HepG2 (cell line): ENCODE measurements at regions of chr6 and their contacts with region 1.

Region 1: DNA sequence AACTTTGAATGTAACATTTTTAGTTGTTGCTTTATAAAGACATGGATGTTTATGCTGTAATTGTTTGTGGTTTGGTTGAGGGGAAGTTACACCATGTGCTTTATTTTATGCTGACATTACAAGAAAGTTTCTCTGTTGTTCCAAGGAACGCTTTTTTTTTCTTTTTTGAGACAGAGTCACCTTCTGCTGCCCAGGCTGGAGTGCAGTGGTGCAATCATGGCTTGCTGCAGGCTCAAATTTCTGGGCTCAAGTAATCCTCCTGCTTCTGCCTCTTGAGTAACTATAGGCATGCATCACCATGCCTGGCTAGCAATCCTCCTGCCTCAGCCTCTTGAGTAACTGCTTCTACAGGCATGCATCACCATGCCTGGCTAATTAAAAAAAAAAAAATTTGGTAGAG is 21.0 kb upstream of the IFNGR1 start:
- DNase-seq: peak; percentile 35
- ATAC-seq: no peak
- H3K4me3 ChIP-seq: no peak overlapping the region
- H3K27ac ChIP-seq: no peak overlapping the region
- H3K4me1 ChIP-seq: peaks cover 57% of the 10 kb centered on the region
- H3K27me3 ChIP-seq: no peaks in the 10 kb centered on the region
- CTCF ChIP-seq: no peak
- EP300 ChIP-seq: no peak
- POLR2A ChIP-seq: no peak
- RAD21 ChIP-seq: no peak

Region 2: GRCh38 chr6:137202078-137202477 is 38.1 kb before region 1 on chr6:
- CTCF ChIA-PET with region 1: no interaction called
- POLR2A ChIA-PET with region 1: no interaction called
- in situ Hi-C with region 1: no loop called
- intact Hi-C with region 1: loop called (anchors 5 kb)
- DNase-seq: no peak
- ATAC-seq: peak; percentile 60
- H3K4me3 ChIP-seq: no peak overlapping the region
- H3K27ac ChIP-seq: no peak overlapping the region
- H3K4me1 ChIP-seq: no peaks in the 10 kb centered on the region
- H3K27me3 ChIP-seq: no peaks in the 10 kb centered on the region
- CTCF ChIP-seq: 0 out of 2 replicates have a peak, but pooled peaks have one; percentile 28
- EP300 ChIP-seq: no peak
- POLR2A ChIP-seq: no peak
- RAD21 ChIP-seq: no peak

Region 3: DNA sequence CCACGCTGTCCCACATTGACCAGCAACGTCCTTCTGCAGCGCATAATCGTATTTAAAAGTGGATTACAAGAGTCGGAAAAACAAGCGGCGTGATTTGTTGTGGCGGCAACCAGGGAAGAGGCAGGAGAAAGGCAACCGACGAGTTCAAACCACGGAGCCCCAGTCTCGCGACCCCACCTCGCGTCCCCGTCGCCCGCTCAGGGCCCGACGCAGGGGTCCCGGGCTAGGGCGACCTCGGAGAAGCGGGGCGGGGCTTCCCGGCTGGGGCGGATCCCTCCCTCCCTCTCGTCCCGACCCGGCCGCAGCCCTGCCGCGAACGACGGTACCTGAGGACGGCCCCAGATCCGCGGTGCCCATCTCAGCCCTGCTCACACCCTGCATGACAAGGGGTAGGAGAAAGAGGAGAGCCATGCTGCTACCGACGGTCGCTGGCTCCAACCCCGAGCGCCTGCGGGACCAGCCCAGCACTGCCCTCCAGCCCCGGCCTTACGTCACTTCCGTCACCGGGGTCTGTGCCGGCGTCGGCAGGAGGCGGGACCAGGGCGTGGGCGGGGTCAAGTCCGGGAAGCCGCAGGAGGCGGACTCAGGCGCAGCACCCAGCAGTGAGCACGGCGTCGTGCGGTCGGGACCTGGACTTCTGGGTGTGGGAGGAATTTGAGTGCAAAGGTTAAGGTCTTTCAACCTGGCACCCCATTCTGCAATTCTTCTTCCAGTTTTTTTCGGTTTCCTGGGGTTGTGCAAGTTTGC is 21.1 kb before region 1 on chr6 and contains the start of gene IFNGR1:
- CTCF ChIA-PET with region 1: no interaction called
- POLR2A ChIA-PET with region 1: interaction called, 7 read pairs
- in situ Hi-C with region 1: no loop called
- intact Hi-C with region 1: loop called (anchors 1 kb)
- DNase-seq: peak; percentile 98
- ATAC-seq: peak; percentile 93
- H3K4me3 ChIP-seq: peak within 1 kb of the TSS; percentile 87 to 93 (median 89)
- H3K27ac ChIP-seq: peak within 1 kb of the TSS; percentile 88
- H3K4me1 ChIP-seq: peaks cover 57% of the 10 kb centered on the region
- H3K27me3 ChIP-seq: peaks cover 0 to 4% of the 10 kb centered on the region in 2 experiments; a peak in 1 of 5 replicates
- CTCF ChIP-seq: no peak; the same call in 1 of the 2 replicates
- EP300 ChIP-seq: peak in 1 of 2 experiments; percentile 81; a peak in 3 of 4 replicates
- POLR2A ChIP-seq: peak; percentile 93 to 97
- RAD21 ChIP-seq: peak; percentile 55
- total RNA-seq, gene IFNGR1: 48.9 and 82.8 TPM in 2 replicates

Region 4: DNA sequence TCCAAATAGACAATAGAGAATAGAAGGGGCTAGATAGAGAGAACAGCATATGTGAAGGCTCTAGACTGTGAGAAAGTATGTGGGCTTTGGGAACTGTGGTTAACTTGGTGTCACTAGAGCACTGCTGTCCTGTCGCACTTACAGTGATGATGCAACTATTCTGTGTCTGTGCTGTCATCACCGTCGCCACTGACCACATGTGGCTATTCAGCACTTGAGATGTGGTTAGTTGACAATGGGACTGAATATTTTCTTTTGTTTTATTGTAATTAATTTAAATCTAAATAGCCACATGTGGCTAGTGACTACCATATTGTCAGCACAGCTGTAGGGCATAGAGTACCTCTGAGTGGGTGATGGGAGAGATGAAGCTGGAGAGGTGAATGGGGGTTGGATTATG is 18.0 kb after region 1 on chr6:
- CTCF ChIA-PET with region 1: no interaction called
- POLR2A ChIA-PET with region 1: interaction called, 8 read pairs
- in situ Hi-C with region 1: no loop called
- intact Hi-C with region 1: loop called (anchors 2 kb)
- DNase-seq: no peak
- ATAC-seq: no peak
- H3K4me3 ChIP-seq: no peak overlapping the region
- H3K27ac ChIP-seq: no peak overlapping the region
- H3K4me1 ChIP-seq: peaks cover 45% of the 10 kb centered on the region
- H3K27me3 ChIP-seq: no peaks in the 10 kb centered on the region
- CTCF ChIP-seq: no peak
- EP300 ChIP-seq: no peak
- POLR2A ChIP-seq: no peak
- RAD21 ChIP-seq: no peak

Region 5: DNA sequence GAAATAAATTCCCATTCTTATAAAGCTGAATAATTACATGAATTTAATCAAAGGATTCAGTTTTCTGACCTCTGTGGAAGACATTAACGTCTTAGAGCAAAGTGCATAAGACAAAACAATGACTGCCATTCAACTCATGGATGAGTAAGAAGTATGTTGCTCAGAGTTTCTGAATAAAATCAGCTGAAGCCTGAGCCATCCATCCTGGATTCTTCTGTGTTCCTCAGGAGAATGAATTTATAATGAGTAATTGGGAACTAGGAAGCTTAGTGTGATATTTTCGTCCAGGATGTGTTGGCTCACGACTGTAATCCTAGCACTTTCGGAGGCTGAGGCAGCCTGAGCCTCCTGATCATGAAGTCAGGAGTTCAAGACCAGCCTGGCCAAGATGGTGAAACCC is 804.3 kb after region 1 on chr6:
- CTCF ChIA-PET with region 1: no interaction called
- POLR2A ChIA-PET with region 1: no interaction called
- in situ Hi-C with region 1: no loop called
- intact Hi-C with region 1: no loop called
- DNase-seq: no peak
- ATAC-seq: no peak
- H3K4me3 ChIP-seq: no peak overlapping the region
- H3K27ac ChIP-seq: no peak overlapping the region
- H3K4me1 ChIP-seq: no peaks in the 10 kb centered on the region
- H3K27me3 ChIP-seq: no peaks in the 10 kb centered on the region
- CTCF ChIP-seq: no peak
- EP300 ChIP-seq: no peak
- POLR2A ChIP-seq: no peak
- RAD21 ChIP-seq: no peak